Activated CD4-positive, alpha-beta T cell treated with anti-CD3 and anti-CD28 coated beads for 36 hours (primary cell): ENCODE measurements at regions of chr14 and their contacts with region 1.

Region 1: GRCh38 chr14:87944987-87945604 is 47.9 kb downstream of the GALC start:
- DNase-seq: no peak
- ATAC-seq: no peak
- H3K4me3 Mint-ChIP-seq: no peak overlapping the region
- H3K27ac Mint-ChIP-seq: no peak overlapping the region
- H3K4me1 Mint-ChIP-seq: no peaks in the 10 kb centered on the region
- H3K27me3 Mint-ChIP-seq: no peaks in the 10 kb centered on the region

Region 2: GRCh38 chr14:88005978-88006851 is 61.1 kb after region 1 on chr14:
- CTCF ChIA-PET with region 1: interaction called, 5 read pairs
- POLR2A ChIA-PET with region 1: no interaction called
- intact Hi-C with region 1: loop called (anchors 2 to 5 kb)
- DNase-seq: peak; percentile 83
- ATAC-seq: peak; percentile 89
- H3K4me3 Mint-ChIP-seq: peak overlapping the region; percentile 82
- H3K27ac Mint-ChIP-seq: peak overlapping the region; percentile 92
- H3K4me1 Mint-ChIP-seq: peaks cover 63% of the 10 kb centered on the region
- H3K27me3 Mint-ChIP-seq: no peaks in the 10 kb centered on the region

Region 3: DNA sequence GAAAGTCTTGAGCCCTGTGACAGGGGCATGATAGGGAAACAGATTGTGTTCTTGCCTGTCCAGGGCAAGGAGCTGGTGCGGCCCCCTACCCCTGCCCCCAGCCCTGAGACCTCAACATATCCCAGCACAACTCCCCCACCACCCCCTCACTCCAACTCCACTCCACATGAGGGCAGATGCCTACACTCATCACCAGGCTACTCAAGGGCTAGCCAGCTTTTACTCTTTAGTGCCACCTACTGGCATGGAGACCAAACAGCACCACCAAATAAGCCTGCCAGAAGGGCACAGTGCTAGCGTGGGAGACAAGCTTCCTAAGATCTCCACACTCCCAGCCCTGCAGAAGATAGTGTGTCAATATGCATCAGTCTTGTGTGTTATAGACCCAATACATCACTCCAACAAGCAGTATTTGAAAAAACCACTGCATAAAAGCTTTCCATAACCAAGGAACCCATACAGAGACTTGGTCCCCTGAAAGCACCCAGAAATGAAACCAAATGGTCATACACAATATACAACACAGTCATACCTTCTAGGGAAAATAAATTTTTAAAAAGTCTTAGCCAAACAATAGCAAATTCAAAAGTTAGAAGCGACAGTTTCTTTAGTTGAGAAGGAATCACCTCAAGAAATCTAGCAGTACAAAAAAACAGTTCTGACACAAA is 223.5 kb after region 1 on chr14:
- CTCF ChIA-PET with region 1: interaction called, 79 read pairs
- POLR2A ChIA-PET with region 1: no interaction called
- intact Hi-C with region 1: loop called (anchors 1 kb)
- DNase-seq: peak; percentile 69
- ATAC-seq: peak; percentile 91
- H3K4me3 Mint-ChIP-seq: no peak overlapping the region
- H3K27ac Mint-ChIP-seq: no peak overlapping the region
- H3K4me1 Mint-ChIP-seq: no peaks in the 10 kb centered on the region
- H3K27me3 Mint-ChIP-seq: peaks cover 7% of the 10 kb centered on the region

Region 4: GRCh38 chr14:88189417-88190191 is 244.5 kb after region 1 on chr14:
- CTCF ChIA-PET with region 1: interaction called, 14 read pairs
- POLR2A ChIA-PET with region 1: no interaction called
- intact Hi-C with region 1: loop called in 1 of 2 experiments (anchors 5 kb)
- DNase-seq: peak; percentile 78
- ATAC-seq: peak; percentile 64
- H3K4me3 Mint-ChIP-seq: no peak overlapping the region
- H3K27ac Mint-ChIP-seq: no peak overlapping the region
- H3K4me1 Mint-ChIP-seq: peaks cover 5% of the 10 kb centered on the region
- H3K27me3 Mint-ChIP-seq: peaks cover 10% of the 10 kb centered on the region

Region 5: GRCh38 chr14:88385345-88386101 is 440.4 kb after region 1 on chr14 and contains the start of gene SPATA7:
- CTCF ChIA-PET with region 1: no interaction called
- POLR2A ChIA-PET with region 1: no interaction called
- intact Hi-C with region 1: loop called in 1 of 2 experiments (anchors 10 kb)
- DNase-seq: peak; percentile 93
- ATAC-seq: peak; percentile 99
- H3K4me3 Mint-ChIP-seq: peak within 1 kb of the TSS; percentile 96
- H3K27ac Mint-ChIP-seq: peak within 1 kb of the TSS; percentile 88
- H3K4me1 Mint-ChIP-seq: peaks cover 17% of the 10 kb centered on the region
- H3K27me3 Mint-ChIP-seq: no peaks in the 10 kb centered on the region
- total RNA-seq, gene SPATA7: 3.4 to 4.0 TPM